GM12878 (cell line): ENCODE measurements at regions of chr12 and their contacts with region 1.

Region 1: GRCh38 chr12:122449353-122449752 is 26.9 kb upstream of the CLIP1 start:
- DNase-seq: no peak
- ATAC-seq: no peak
- H3K4me3 ChIP-seq: no peak overlapping the region
- H3K27ac ChIP-seq: no peak overlapping the region
- H3K4me1 ChIP-seq: peaks cover 14% of the 10 kb centered on the region
- H3K27me3 ChIP-seq: no peaks in the 10 kb centered on the region
- CTCF ChIP-seq: no peak
- EP300 ChIP-seq: no peak
- POLR2A ChIP-seq: no peak
- RAD21 ChIP-seq: no peak

Region 2: DNA sequence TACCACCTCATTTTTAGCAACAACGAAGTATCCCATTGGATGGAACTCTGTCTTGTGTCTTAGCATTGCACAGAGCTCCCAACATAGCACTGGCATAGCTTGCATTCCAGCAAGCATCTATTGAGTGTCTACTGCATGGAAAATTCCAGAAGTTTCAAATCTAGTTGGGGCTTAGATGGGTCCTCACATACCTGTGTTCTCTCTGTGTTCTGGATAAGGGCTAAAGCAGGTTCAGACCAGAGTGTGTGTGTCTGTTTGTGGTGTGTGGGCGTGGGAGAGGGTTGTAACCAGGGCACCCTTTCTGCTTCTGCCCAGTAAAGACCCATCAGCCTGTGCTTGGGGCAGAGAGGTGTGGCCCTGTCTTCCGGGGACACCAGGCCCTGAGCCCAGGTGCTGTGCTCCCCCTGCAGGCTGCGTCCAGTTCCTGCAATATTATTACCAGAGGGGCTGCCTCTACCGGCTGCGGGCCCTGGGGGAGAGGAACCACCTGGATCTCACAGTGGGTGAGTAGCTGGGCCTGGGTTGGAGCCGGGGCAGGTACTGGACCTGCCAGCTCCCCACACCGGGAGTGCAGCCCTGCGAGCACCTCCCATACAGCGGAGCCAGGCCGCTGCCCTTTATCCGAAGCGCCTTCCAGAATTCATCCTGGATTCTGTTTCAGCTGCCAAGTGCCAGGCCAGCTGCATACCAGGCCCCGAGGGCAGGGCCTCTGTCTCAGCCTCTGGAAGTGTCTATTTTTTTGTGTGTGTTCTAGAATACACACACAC is 676.2 kb before region 1 on chr12:
- CTCF ChIA-PET with region 1: no interaction called
- POLR2A ChIA-PET with region 1: no interaction called
- RAD21 ChIA-PET with region 1: no interaction called
- SMC1A ChIA-PET with region 1: no interaction called
- in situ Hi-C with region 1: no loop called
- intact Hi-C with region 1: no loop called
- DNase-seq: no peak
- ATAC-seq: peak; percentile 91
- H3K4me3 ChIP-seq: no peak overlapping the region
- H3K27ac ChIP-seq: no peak overlapping the region
- H3K4me1 ChIP-seq: peaks cover 7% of the 10 kb centered on the region; the same call in 1 of the 2 replicates
- H3K27me3 ChIP-seq: no peaks in the 10 kb centered on the region
- CTCF ChIP-seq: peak; percentile 92 to 95 (median 94); a peak in 5 of 6 replicates
- EP300 ChIP-seq: no peak
- POLR2A ChIP-seq: no peak
- RAD21 ChIP-seq: peak; percentile 97

Region 3: DNA sequence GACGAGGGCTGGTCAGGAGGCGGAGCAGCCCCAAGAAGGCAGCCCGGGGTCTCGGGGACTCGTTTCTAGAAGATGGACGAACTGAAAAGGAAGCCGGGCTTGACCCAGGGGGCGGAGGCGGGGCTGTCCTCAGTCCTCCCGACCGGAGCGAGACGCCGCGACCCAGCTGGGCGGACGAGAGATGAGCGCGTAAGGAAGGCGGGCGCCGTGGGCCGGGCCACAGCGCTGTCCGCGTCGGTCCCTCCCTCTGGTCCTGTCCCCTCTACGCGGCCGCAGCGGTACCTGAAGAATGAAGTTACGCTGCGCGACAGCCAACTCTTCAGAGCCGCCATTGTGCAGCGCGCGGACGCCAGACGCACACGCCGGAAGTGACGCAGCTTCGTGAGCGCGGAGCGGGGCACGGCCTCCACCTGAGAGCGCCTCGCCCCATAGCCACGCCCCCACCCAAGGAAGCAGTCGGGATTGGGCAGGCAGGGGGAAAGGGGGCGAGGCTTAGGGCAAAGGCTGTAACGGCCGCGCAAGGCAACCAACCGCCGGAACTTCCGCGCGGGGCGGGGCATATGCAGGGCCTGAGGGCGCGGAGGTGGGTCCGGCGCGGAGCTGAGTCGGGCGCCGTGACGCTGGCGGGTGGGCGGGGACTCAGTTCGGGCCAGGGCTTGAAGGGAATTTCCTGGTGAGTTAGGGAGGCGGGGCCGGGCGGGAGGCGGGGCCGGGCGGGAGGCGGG is 223.5 kb before region 1 on chr12 and contains the start of gene DIABLO:
- CTCF ChIA-PET with region 1: no interaction called
- POLR2A ChIA-PET with region 1: no interaction called
- RAD21 ChIA-PET with region 1: no interaction called
- SMC1A ChIA-PET with region 1: no interaction called
- in situ Hi-C with region 1: no loop called
- intact Hi-C with region 1: no loop called
- DNase-seq: peak; percentile 96
- ATAC-seq: peak; percentile 97
- H3K4me3 ChIP-seq: peak within 1 kb of the TSS; percentile 87
- H3K27ac ChIP-seq: peak within 1 kb of the TSS; percentile 91
- H3K4me1 ChIP-seq: peaks cover 16% of the 10 kb centered on the region
- H3K27me3 ChIP-seq: no peaks in the 10 kb centered on the region
- CTCF ChIP-seq: no peak
- EP300 ChIP-seq: no peak; a peak in 1 of 4 replicates
- POLR2A ChIP-seq: peak; percentile 99
- RAD21 ChIP-seq: no peak
- polyA plus RNA-seq, gene DIABLO: 18.3 to 21.1 TPM

Region 4: GRCh38 chr12:122413516-122414404 is 35.6 kb before region 1 on chr12:
- CTCF ChIA-PET with region 1: interaction called, 3 read pairs
- POLR2A ChIA-PET with region 1: interaction called, 5 read pairs
- RAD21 ChIA-PET with region 1: no interaction called
- SMC1A ChIA-PET with region 1: no interaction called
- in situ Hi-C with region 1: no loop called
- intact Hi-C with region 1: loop called (anchors 5 kb)
- DNase-seq: no peak
- ATAC-seq: peak; percentile 63
- H3K4me3 ChIP-seq: peak overlapping the region; percentile 50; the same call in 1 of the 2 replicates
- H3K27ac ChIP-seq: peak overlapping the region; percentile 95
- H3K4me1 ChIP-seq: peaks cover 36% of the 10 kb centered on the region
- H3K27me3 ChIP-seq: no peaks in the 10 kb centered on the region
- CTCF ChIP-seq: no peak
- EP300 ChIP-seq: 0 out of 4 replicates have a peak, but pooled peaks of 1 of the 2 experiments have one; percentile 27
- POLR2A ChIP-seq: no peak
- RAD21 ChIP-seq: no peak